Panc1 (cell line): ENCODE measurements at regions of chr17 and their contacts with region 1.

Region 1: DNA sequence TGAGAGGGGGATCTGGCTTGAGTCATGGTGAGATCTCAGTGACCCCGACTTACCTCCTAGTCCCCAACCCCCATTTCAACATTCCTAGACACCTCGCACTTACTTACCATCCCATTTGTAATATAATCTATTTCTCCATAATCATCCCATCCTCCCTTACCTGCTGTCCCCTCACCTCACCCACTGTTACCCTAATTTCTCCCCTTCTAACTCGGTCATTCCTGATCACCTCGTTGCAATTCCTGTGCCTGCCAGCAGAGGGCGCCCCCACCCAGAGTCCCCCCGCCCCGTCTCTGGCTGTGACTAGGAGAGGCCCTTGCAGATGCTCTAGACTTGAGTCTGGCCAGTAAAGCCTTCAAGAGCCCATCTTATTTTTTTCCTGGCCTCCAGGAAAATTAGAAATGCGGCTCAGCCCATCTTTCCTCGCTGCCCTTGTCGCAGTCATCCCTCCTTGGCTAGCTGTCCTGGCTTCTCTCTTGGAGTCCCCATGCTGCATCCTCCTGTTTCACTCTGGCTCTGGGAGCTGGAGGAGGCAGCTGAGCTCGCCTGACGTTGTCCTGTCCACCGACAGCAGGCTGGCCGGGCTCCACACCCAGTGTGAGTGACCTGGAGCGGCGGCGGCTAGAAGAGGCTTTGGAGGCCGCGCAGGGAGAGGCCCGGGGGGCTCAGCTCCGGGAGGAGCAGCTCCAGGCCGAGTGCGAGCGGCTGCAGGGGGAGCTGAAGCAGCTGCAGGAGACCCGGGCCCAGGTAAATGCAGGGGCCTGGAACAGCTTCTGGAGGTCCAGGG is 5.0 kb downstream of the TBKBP1 start:
- DNase-seq: no peak
- ATAC-seq: peak; percentile 63
- H3K4me3 ChIP-seq: no peak overlapping the region
- H3K27ac ChIP-seq: no peak overlapping the region
- H3K4me1 ChIP-seq: peaks cover 6% of the 10 kb centered on the region; the same call in 1 of the 2 replicates
- H3K27me3 ChIP-seq: no peaks in the 10 kb centered on the region
- CTCF ChIP-seq: peak; percentile 100

Region 2: DNA sequence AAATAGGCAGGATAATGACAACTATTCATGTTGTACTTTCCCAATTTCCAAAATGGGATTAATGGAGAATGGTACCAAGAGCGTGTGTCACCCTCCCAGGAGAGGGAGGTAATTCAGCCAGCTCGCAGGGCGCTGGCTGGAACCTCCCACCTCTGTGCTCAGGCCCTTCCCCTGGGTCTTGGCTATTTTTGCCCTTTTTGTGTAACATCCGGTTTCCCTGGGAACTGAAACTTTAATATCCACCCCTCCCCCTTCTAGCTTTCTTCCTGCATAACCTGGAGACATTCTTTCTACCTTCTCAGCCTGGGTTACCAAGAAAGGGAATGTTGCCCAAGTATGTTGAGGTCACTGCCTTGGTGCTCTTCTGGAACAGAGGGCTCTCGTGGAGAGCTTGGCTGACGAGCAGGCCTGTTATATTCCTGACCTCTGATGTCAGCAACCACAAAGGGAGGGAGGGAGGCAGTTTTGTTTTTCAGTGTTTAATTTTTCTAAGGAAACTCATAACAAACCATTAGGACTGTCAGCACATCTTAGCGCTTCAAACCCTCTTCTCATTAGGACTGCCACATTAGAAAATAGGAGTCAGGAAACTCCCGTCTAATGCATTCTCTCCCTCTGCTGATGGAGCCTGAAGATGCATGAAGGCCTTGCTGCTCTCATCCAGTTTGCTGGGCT is 419.7 kb before region 1 on chr17:
- CTCF ChIA-PET with region 1: no interaction called
- POLR2A ChIA-PET with region 1: no interaction called
- in situ Hi-C with region 1: no loop called
- intact Hi-C with region 1: no loop called
- DNase-seq: no peak
- ATAC-seq: peak; percentile 57
- H3K4me3 ChIP-seq: no peak overlapping the region
- H3K27ac ChIP-seq: no peak overlapping the region
- H3K4me1 ChIP-seq: peaks cover 18% of the 10 kb centered on the region
- H3K27me3 ChIP-seq: no peaks in the 10 kb centered on the region
- CTCF ChIP-seq: no peak

Region 3: DNA sequence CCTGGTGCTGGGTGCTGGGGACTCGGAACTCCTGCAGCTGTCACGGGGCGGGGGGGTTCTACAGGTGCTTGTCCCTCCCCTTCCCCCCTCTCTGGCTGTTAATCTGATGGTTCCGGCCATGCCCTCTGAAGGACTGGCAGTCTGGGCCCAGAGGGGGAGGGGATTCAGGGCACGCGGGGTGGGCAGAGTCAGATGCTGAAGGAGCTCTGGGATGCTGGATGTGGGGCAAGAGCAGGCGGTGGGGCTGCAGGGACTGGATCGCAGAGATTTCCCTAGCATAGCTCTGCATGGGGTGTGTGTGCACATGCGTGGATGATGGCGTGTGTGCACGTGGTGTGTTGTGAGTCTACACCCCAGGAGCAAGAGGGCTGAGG is 28.8 kb after region 1 on chr17:
- CTCF ChIA-PET with region 1: interaction called, 3 read pairs
- POLR2A ChIA-PET with region 1: interaction called, 11 read pairs
- in situ Hi-C with region 1: no loop called
- intact Hi-C with region 1: no loop called
- DNase-seq: no peak
- ATAC-seq: no peak
- H3K4me3 ChIP-seq: no peak overlapping the region
- H3K27ac ChIP-seq: no peak overlapping the region
- H3K4me1 ChIP-seq: no peaks in the 10 kb centered on the region
- H3K27me3 ChIP-seq: peaks cover 11% of the 10 kb centered on the region; the same call in 1 of the 2 replicates
- CTCF ChIP-seq: no peak

Region 4: DNA sequence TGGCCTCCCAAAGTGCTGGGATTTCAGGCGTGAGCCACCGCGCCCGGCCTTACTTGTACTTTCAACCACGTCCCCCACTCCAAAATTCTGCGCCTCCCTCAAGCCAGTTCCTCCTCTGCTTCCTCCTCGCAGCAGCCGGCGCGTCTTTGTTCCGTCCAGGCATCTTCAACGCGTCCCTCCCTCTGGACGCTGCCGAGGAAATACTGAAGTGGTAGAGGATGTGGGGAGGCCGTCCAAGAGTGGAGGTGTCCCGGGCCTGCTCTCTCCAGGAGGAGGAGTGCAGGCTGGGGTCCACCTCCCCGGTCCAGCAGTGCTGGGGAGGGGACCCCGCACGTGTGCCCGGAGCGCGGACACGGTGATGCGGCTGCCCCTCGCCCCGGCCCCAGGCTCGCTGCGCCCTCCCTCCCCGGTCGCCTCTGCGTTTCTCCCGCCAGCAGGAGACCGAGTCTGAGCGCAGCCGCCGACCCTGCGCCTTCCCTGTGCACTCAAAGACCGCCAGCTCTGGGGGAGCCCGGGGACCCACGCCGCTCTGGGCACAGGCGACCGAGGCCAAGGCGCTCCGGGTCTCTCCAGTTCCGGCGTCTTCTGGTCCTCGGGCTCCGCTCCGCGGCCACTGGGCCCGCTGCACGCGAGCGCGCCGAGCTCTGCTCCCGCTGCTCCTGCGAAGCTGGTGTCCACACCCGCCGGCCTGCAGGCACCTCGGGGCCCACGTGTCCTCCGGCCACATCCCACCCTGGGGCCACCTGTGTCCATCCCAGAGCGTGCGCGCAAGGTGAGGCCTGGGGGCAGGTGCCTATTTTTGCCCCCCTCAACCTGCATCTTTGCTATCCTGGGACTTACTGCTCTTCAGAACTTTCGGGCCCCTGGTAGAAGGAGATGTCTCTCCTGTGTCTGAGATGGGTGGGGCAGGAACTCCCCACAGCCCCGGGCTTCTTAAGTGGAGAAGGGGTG is 90.9 kb after region 1 on chr17:
- CTCF ChIA-PET with region 1: interaction called, 12 read pairs
- POLR2A ChIA-PET with region 1: no interaction called
- in situ Hi-C with region 1: no loop called
- intact Hi-C with region 1: no loop called
- DNase-seq: no peak
- ATAC-seq: peak; percentile 99
- H3K4me3 ChIP-seq: peak overlapping the region; percentile 41 to 60
- H3K27ac ChIP-seq: no peak overlapping the region
- H3K4me1 ChIP-seq: peaks cover 4% of the 10 kb centered on the region; the same call in 1 of the 2 replicates
- H3K27me3 ChIP-seq: peaks cover 40% of the 10 kb centered on the region
- CTCF ChIP-seq: peak; percentile 91

Region 5: DNA sequence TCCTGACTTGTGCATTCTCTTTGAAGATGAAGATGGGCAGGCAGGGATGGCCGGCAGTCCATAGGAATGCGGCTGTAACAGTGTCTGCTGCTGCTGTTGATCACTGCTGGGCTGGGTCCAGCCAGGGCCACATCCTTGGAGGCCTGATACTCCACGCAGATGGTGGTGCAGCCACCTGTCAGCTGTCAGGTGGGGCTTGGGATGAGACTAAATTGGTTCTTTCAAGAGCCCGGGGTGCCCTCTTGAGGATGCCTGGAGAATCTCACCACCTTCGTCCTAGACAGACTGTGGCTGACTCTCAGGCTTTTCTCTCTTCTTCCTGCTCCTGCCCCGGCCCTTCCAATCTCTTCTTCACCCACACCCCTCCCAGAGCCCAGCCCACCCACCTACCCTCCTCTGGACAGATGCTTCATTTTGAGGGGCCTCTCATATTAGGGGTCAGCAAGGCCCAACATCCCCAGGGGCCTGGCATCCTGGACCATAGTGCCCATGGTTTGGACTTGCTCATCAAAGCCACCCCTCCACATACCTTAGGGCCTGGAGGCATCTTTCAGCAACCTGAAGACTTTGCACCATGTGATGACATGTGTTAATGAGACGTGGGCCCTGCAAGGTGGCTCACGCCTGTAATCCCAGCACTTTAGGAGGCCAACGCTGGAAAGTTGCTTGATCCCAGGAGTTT is 103.5 kb after region 1 on chr17:
- CTCF ChIA-PET with region 1: interaction called, 17 read pairs
- POLR2A ChIA-PET with region 1: no interaction called
- in situ Hi-C with region 1: no loop called
- intact Hi-C with region 1: loop called (anchors 5 kb)
- DNase-seq: peak; percentile 30
- ATAC-seq: peak; percentile 94
- H3K4me3 ChIP-seq: no peak overlapping the region
- H3K27ac ChIP-seq: no peak overlapping the region
- H3K4me1 ChIP-seq: no peaks in the 10 kb centered on the region
- H3K27me3 ChIP-seq: no peaks in the 10 kb centered on the region
- CTCF ChIP-seq: peak; percentile 91

Region 6: DNA sequence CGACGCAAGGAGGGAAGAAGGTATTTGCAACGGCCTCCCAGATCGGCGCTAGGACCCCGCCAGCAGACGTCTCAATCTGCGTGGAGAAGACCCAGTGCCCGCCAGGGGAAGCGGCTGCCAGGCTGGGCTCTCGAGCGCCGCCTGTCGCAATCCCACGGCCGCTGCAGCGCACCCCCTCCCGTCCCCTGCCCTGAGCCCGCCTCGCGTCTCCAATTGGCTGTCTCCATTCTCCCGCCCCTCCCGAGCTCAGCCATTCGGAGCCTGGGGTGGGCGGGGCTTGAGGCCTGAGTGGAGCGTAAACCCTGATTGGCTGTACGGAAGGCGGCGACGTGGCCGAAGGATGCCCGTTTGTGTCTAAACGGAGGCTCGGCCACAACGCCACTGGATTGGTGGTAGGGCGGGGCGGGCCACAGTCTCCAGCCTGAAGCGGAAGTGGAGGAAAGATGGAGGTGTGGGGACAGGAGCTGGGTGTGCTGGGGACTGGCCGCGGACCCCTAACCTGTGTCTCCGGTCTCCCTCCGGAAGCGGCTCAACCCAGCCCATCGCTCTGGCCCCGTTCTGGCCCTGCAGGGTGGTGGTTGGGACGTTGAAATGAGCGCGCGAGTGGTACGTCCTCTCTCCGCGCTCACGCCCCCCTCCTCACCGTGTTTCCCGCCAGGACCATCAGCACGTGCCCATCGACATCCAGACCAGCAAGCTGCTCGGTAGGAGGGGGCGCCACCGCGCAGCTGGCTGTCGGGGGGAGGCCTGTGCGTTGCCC is 271.9 kb after region 1 on chr17 and contains the start of gene CDK5RAP3:
- CTCF ChIA-PET with region 1: no interaction called
- POLR2A ChIA-PET with region 1: interaction called, 13 read pairs
- in situ Hi-C with region 1: no loop called
- intact Hi-C with region 1: no loop called
- DNase-seq: peak; percentile 90
- ATAC-seq: peak; percentile 97
- H3K4me3 ChIP-seq: peak within 1 kb of the TSS; percentile 84 to 90
- H3K27ac ChIP-seq: peak within 1 kb of the TSS; percentile 87
- H3K4me1 ChIP-seq: peaks cover 20% of the 10 kb centered on the region
- H3K27me3 ChIP-seq: no peaks in the 10 kb centered on the region
- CTCF ChIP-seq: peak; percentile 100
- total RNA-seq, gene CDK5RAP3: 193 TPM

Region 7: GRCh38 chr17:47978324-47978723 is 279.4 kb after region 1 on chr17:
- CTCF ChIA-PET with region 1: interaction called, 10 read pairs
- POLR2A ChIA-PET with region 1: no interaction called
- in situ Hi-C with region 1: no loop called
- intact Hi-C with region 1: no loop called
- DNase-seq: no peak
- ATAC-seq: peak; percentile 85
- H3K4me3 ChIP-seq: no peak overlapping the region
- H3K27ac ChIP-seq: no peak overlapping the region
- H3K4me1 ChIP-seq: no peaks in the 10 kb centered on the region
- H3K27me3 ChIP-seq: no peaks in the 10 kb centered on the region
- CTCF ChIP-seq: no peak; the same call in 1 of the 2 replicates